ENCODE measurements at regions of chr2 and their contacts with region 1.

Region 1: GRCh38 chr2:102166189-102166845 is 20.5 kb upstream of the IL1RL2 start:
- DNase-seq: peak in 1 of 2 donors; percentile 71
- H3K4me3 ChIP-seq: no peak overlapping the region
- H3K27ac ChIP-seq: peak overlapping the region in 2 of 5 donors; percentile 2 to 34
- H3K4me1 ChIP-seq: peaks cover 4 to 19% (median 13%) of the 10 kb centered on the region in 4 donors
- H3K27me3 ChIP-seq: no peaks in the 10 kb centered on the region
- CTCF ChIP-seq: peak in 5 of 7 experiments; percentile 43 to 71 (median 51)
- EP300 ChIP-seq: no peak
- POLR2A ChIP-seq: no peak

Region 2: DNA sequence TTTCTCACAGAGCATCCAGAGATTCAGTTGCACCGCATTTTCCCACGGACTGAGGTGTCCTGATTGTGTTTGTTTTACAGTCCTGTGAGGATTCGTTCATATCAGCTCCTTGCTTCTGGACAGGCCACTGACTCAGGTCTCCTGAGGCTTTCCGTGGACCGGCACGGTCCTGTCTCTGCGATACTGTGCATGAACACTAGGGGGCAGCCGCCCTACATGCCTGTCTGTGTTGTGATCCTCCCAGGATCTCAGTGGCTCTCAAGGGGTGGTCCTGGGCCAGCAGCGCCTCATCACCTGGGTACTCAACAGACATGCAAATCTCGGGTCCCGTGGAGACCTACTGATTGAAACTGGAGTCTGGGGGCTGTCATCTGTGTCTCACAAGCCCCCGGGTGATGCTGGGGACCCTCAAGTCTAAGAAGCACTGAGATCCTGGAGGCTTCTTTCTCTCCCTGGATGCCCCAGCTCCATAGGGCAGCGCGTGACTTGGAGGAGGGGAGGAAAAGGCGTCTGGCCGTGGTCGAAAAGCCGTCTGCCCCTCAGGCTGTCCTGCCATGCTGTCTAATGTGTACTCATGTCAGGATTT is 145.6 kb before region 1 on chr2:
- intact Hi-C with region 1: loop called (anchors 10 kb)
- DNase-seq: peak; percentile 91 to 93
- H3K4me3 ChIP-seq: no peak overlapping the region
- H3K27ac ChIP-seq: peak overlapping the region in 3 of 5 donors; percentile 6 to 67 (median 62)
- H3K4me1 ChIP-seq: peaks cover 0 to 29% (median 6%) of the 10 kb centered on the region in 4 donors
- H3K27me3 ChIP-seq: no peaks in the 10 kb centered on the region
- CTCF ChIP-seq: peak in 5 of 7 experiments; percentile 97 to 98 (median 98)
- EP300 ChIP-seq: no peak
- POLR2A ChIP-seq: no peak

Region 3: GRCh38 chr2:102473020-102473419 is 306.7 kb after region 1 on chr2 and contains the start of gene SLC9A4:
- intact Hi-C with region 1: no loop called
- DNase-seq: peak; percentile 85 to 86
- H3K4me3 ChIP-seq: peak within 1 kb of the TSS; percentile 26 to 46 (median 36)
- H3K27ac ChIP-seq: peak within 1 kb of the TSS in 4 of 5 donors; percentile 72 to 94 (median 76)
- H3K4me1 ChIP-seq: peaks cover 0 to 13% (median 3%) of the 10 kb centered on the region in 4 donors
- H3K27me3 ChIP-seq: no peaks in the 10 kb centered on the region
- CTCF ChIP-seq: peak in 6 of 7 experiments; percentile 53 to 97 (median 74)
- EP300 ChIP-seq: no peak
- POLR2A ChIP-seq: no peak
- total RNA-seq, gene SLC9A4: 92.4 to 143 (median 117) TPM in 4 of 5 donors, not detected in the other

Measured in stomach (tissue), 19 donors.